Left cardiac atrium (tissue), 4 donors: ENCODE measurements at regions of chr2 and their contacts with region 1.

Region 1: DNA sequence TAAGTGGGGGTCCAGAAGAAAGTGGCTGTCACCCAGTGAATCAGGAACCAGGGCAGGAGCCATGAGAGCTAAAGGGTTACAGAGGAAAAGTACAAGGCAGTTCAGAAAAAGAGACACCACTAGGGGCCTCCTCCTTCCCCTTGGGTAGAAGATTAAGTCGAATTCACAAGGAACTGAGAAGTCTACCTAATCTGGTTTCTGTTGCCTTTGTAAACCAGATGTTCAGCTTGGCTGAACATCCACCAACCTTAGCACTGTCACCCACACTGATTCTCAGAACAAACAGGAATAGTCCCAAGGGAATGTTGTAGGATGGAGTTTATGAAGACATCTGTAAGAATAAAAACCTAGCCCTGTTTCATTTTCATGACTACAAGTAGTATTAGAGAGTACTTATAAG is 90.4 kb upstream of the NOSTRIN start:
- DNase-seq: no peak
- ATAC-seq: no peak

Region 2: GRCh38 chr2:168494190-168494711 is 217.8 kb before region 1 on chr2:
- intact Hi-C with region 1: no loop called
- DNase-seq: no peak
- ATAC-seq: no peak

Region 3: DNA sequence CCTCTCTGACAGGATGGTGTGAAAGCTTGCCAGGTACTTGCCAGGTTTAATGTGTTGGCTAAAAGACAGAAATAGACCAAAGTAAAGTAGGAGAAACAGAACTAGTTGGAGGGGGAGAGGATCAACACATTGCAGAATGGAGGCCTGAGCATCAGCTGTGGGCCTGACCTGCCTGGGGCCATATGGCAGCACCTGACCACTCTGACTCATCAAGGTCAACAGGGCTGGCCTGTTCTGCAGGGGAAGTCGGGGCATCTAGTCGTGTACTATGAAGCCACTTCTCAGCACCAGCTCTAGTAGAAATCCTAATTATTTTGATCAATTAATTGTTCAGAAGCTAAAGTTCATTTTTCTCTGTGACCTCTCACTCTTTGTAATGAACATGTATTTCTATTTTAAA is 54.6 kb after region 1 on chr2:
- intact Hi-C with region 1: loop called in 1 of 2 experiments (anchors 10 kb)
- DNase-seq: no peak
- ATAC-seq: peak in 1 of 2 donors; percentile 34